ENCODE measurements at regions of chr14 and their contacts with region 1.

Region 1: GRCh38 chr14:95196290-95196689 is 39.0 kb upstream of the DICER1 start:
- DNase-seq: no peak
- ATAC-seq: no peak
- H3K4me3 ChIP-seq: no peak overlapping the region
- H3K27ac ChIP-seq: no peak overlapping the region
- H3K4me1 ChIP-seq: peaks cover 0 to 12% (median 0%) of the 10 kb centered on the region in 12 donors
- H3K27me3 ChIP-seq: peaks cover 0 to 26% (median 0%) of the 10 kb centered on the region in 9 donors
- CTCF ChIP-seq: peak in 11 of 12 donors; percentile 15 to 57 (median 34)
- POLR2A ChIP-seq: no peak

Region 2: GRCh38 chr14:94689218-94689984 is 506.9 kb before region 1 on chr14:
- intact Hi-C with region 1: loop called in 2 of 10 experiments (anchors 5 to 10 kb)
- DNase-seq: peak; percentile 54 to 80 (median 64)
- ATAC-seq: peak; percentile 81 to 98 (median 88)
- H3K4me3 ChIP-seq: peak overlapping the region in 5 of 12 donors; percentile 0 to 43 (median 7)
- H3K27ac ChIP-seq: no peak overlapping the region
- H3K4me1 ChIP-seq: peaks cover 0 to 8% (median 0%) of the 10 kb centered on the region in 12 donors
- H3K27me3 ChIP-seq: peaks cover 0 to 12% (median 5%) of the 10 kb centered on the region in 9 donors
- CTCF ChIP-seq: peak; percentile 89 to 99 (median 96)
- POLR2A ChIP-seq: no peak

Region 3: DNA sequence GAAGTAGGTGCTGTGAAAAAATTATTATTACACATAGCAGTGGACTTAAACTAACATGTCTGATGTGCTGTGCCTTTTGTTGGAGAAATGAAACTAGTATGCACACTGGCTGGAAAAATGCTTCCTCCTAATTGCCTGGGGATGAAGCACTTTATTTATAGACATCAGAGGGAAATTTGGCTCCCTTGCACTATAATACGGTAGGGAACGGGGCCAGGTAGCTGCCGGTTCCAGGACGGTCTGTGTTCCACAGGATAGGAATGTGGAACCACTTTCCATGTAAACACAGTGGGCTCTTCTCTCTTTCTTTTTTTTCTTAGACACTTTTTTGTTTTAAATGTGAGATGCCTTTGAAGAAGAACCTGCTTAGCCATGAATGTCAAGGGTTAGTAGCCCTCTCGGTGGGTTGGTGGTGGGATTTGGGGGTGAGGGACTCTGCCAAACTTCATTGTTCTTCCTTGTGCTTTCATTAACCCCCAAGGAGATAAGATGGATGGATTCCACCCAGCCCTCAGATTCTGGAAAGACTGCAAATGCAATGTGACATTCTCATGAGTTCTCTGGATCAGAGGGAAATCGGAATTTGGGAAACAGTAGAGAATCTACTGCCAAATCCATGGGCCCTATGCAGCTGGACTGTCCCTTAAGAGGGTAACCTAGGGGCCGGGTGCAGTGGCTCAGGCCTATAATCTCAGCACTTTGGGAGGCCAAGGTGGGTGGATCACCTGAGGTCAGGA is 368.4 kb before region 1 on chr14:
- intact Hi-C with region 1: loop called in 1 of 10 experiments (anchors 5 kb)
- DNase-seq: peak in 4 of 5 donors; percentile 21 to 53 (median 46)
- ATAC-seq: peak; percentile 82 to 89 (median 87)
- H3K4me3 ChIP-seq: no peak overlapping the region
- H3K27ac ChIP-seq: peak overlapping the region in 1 of 12 donors; percentile 43
- H3K4me1 ChIP-seq: peaks cover 0 to 15% (median 1%) of the 10 kb centered on the region in 12 donors
- H3K27me3 ChIP-seq: peaks cover 0 to 5% (median 0%) of the 10 kb centered on the region in 9 donors
- CTCF ChIP-seq: no peak
- POLR2A ChIP-seq: no peak

Region 4: GRCh38 chr14:94945615-94946014 is 250.7 kb before region 1 on chr14:
- intact Hi-C with region 1: no loop called
- DNase-seq: no peak
- ATAC-seq: no peak
- H3K4me3 ChIP-seq: no peak overlapping the region
- H3K27ac ChIP-seq: peak overlapping the region in 1 of 12 donors; percentile 62
- H3K4me1 ChIP-seq: no peaks in the 10 kb centered on the region
- H3K27me3 ChIP-seq: no peaks in the 10 kb centered on the region
- CTCF ChIP-seq: no peak
- POLR2A ChIP-seq: no peak

Region 5: DNA sequence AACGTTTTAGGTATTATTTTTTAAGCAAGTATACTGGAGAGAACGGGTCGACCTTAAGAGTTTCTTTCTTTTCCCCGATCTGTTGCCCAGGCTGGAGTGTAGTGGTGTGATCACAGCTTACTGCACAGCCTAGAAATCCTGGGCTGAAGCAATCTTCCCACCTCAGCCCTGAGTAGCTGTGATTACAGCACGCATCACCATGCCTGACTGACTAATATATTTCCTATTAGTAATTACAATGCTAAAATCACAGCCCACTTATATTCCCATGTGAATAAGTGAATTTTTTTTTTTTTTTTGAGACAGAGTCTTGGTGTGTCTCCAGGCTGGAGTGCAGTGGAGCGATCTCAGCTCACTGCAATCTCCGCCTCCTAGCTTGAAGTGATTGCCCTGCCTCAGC is 89.3 kb before region 1 on chr14:
- intact Hi-C with region 1: loop called in 3 of 10 experiments (anchors 5 to 10 kb)
- DNase-seq: no peak
- ATAC-seq: no peak
- H3K4me3 ChIP-seq: no peak overlapping the region
- H3K27ac ChIP-seq: no peak overlapping the region
- H3K4me1 ChIP-seq: peaks cover 0 to 6% (median 0%) of the 10 kb centered on the region in 12 donors
- H3K27me3 ChIP-seq: no peaks in the 10 kb centered on the region
- CTCF ChIP-seq: no peak
- POLR2A ChIP-seq: no peak

Region 6: DNA sequence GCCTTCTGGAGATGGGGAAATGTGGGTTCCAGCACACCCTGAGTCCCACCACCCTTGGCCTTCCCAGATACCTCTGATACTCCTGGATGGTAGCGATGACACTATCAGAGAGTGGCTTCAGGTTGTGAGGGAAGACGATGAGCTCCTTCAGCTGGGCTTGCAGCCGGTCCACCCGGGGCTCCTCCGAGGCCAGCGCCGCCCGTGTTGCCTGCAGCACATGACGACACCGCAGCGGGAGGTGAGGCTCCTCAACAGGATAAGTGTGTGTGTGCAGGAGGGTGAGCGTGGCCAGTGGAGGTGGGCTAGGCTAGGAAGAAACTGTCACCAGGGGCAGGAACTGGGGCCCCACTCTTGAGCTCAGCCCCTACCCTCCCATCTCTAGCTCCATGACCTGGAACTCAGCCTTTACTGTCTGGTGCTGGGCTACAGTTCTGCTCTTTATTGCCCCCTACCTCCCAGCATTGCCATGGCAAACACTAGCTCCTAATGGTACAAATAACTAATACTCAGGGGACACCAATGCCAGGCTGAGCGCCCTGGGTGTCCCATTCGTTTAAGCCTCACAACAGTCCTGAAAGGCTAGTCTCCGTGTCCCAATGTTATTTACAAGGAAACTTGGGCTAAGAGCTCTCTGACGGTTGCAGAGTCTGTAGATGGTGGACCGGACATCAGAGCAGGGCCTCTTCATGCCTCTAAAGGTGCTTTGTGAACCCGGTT is 256.0 kb after region 1 on chr14:
- intact Hi-C with region 1: no loop called
- DNase-seq: peak in 1 of 5 donors; percentile 7
- ATAC-seq: peak in 1 of 4 donors; percentile 21
- H3K4me3 ChIP-seq: no peak overlapping the region
- H3K27ac ChIP-seq: no peak overlapping the region
- H3K4me1 ChIP-seq: peaks cover 0 to 4% (median 0%) of the 10 kb centered on the region in 12 donors
- H3K27me3 ChIP-seq: no peaks in the 10 kb centered on the region
- CTCF ChIP-seq: peak in 7 of 12 donors; percentile 8 to 38 (median 24)
- POLR2A ChIP-seq: no peak

Measured in heart left ventricle (tissue), 16 donors.